ENCODE measurements at regions of chr14 and their contacts with region 1.

Region 1: GRCh38 chr14:43503590-43503907 is 1003.5 kb downstream of the FSCB start:
- DNase-seq: no peak
- H3K4me3 ChIP-seq: no peak overlapping the region
- H3K4me3 Mint-ChIP-seq: no peak overlapping the region
- H3K27ac Mint-ChIP-seq: no peak overlapping the region
- H3K4me1 ChIP-seq: no peaks in the 10 kb centered on the region
- H3K4me1 Mint-ChIP-seq: no peaks in the 10 kb centered on the region
- H3K27me3 ChIP-seq: no peaks in the 10 kb centered on the region
- H3K27me3 Mint-ChIP-seq: no peaks in the 10 kb centered on the region
- CTCF ChIP-seq: peak in 1 of 2 experiments; percentile 6

Region 2: DNA sequence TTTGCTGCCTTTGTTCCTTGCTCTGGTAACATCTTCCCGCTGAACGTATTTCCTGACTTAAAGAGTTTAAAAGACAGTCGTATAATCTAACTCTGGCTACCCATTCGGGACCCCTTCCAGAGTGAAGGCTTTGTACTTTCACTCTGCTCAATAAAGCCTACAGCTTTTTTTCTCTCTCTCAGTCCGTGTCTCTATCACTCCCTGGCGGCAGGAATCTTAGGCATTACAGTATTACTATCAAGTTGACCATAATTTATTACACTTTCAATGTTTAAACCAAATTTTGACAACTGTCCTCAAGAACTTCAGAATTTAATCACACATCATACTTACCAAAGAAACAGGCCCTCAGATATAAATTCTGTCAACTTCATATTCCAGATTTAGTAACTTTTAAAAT is 35.7 kb after region 1 on chr14:
- CTCF ChIA-PET with region 1: no interaction called
- POLR2A ChIA-PET with region 1: no interaction called
- intact Hi-C with region 1: loop called (anchors 1 kb)
- DNase-seq: peak; percentile 43 to 45
- H3K4me3 ChIP-seq: no peak overlapping the region
- H3K4me3 Mint-ChIP-seq: peak overlapping the region; percentile 57
- H3K27ac Mint-ChIP-seq: peak overlapping the region; percentile 16
- H3K4me1 ChIP-seq: no peaks in the 10 kb centered on the region
- H3K4me1 Mint-ChIP-seq: peaks cover 11% of the 10 kb centered on the region
- H3K27me3 ChIP-seq: no peaks in the 10 kb centered on the region
- H3K27me3 Mint-ChIP-seq: no peaks in the 10 kb centered on the region
- CTCF ChIP-seq: peak; percentile 37 to 39

Region 3: GRCh38 chr14:43795600-43796228 is 292.2 kb after region 1 on chr14:
- CTCF ChIA-PET with region 1: no interaction called
- POLR2A ChIA-PET with region 1: no interaction called
- intact Hi-C with region 1: loop called (anchors 2 kb)
- DNase-seq: peak in 1 of 2 experiments; percentile 7
- H3K4me3 ChIP-seq: no peak overlapping the region
- H3K4me3 Mint-ChIP-seq: no peak overlapping the region
- H3K27ac Mint-ChIP-seq: no peak overlapping the region
- H3K4me1 ChIP-seq: no peaks in the 10 kb centered on the region
- H3K4me1 Mint-ChIP-seq: no peaks in the 10 kb centered on the region
- H3K27me3 ChIP-seq: no peaks in the 10 kb centered on the region
- H3K27me3 Mint-ChIP-seq: no peaks in the 10 kb centered on the region
- CTCF ChIP-seq: peak; percentile 16 to 40

Region 4: DNA sequence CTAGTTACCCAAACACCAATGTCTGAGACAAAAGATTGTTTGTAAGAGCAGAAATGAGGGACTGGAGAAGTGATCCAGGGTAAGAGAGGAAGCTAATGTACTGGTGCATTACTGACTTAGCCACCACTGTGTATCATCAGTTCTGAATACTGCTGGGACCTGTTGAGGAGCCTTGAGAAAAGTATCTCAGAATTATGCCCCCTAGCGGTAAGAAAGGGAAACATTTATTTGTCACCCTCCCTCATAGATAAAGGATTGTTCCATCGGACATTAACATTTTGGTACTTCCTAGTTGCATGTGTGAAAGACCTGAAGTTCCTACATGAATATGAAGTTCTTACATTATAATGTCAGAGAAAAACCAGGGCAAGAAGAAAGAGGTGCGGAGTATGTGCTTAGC is 391.0 kb after region 1 on chr14:
- CTCF ChIA-PET with region 1: no interaction called
- POLR2A ChIA-PET with region 1: no interaction called
- intact Hi-C with region 1: loop called (anchors 1 kb)
- DNase-seq: peak in 1 of 2 experiments; percentile 30
- H3K4me3 ChIP-seq: no peak overlapping the region
- H3K4me3 Mint-ChIP-seq: no peak overlapping the region
- H3K27ac Mint-ChIP-seq: no peak overlapping the region
- H3K4me1 ChIP-seq: no peaks in the 10 kb centered on the region
- H3K4me1 Mint-ChIP-seq: no peaks in the 10 kb centered on the region
- H3K27me3 ChIP-seq: no peaks in the 10 kb centered on the region
- H3K27me3 Mint-ChIP-seq: no peaks in the 10 kb centered on the region
- CTCF ChIP-seq: peak; percentile 33 to 49

Region 5: GRCh38 chr14:44149597-44149996 is 646.0 kb after region 1 on chr14:
- CTCF ChIA-PET with region 1: no interaction called
- POLR2A ChIA-PET with region 1: no interaction called
- intact Hi-C with region 1: loop called (anchors 10 kb)
- DNase-seq: peak; percentile 63 to 64
- H3K4me3 ChIP-seq: no peak overlapping the region
- H3K4me3 Mint-ChIP-seq: no peak overlapping the region
- H3K27ac Mint-ChIP-seq: no peak overlapping the region
- H3K4me1 ChIP-seq: no peaks in the 10 kb centered on the region
- H3K4me1 Mint-ChIP-seq: no peaks in the 10 kb centered on the region
- H3K27me3 ChIP-seq: no peaks in the 10 kb centered on the region
- H3K27me3 Mint-ChIP-seq: no peaks in the 10 kb centered on the region
- CTCF ChIP-seq: peak; percentile 52 to 64

Measured in Caco-2 (cell line).